ENCODE measurements at regions of chr3 and their contacts with region 1.

Region 1: DNA sequence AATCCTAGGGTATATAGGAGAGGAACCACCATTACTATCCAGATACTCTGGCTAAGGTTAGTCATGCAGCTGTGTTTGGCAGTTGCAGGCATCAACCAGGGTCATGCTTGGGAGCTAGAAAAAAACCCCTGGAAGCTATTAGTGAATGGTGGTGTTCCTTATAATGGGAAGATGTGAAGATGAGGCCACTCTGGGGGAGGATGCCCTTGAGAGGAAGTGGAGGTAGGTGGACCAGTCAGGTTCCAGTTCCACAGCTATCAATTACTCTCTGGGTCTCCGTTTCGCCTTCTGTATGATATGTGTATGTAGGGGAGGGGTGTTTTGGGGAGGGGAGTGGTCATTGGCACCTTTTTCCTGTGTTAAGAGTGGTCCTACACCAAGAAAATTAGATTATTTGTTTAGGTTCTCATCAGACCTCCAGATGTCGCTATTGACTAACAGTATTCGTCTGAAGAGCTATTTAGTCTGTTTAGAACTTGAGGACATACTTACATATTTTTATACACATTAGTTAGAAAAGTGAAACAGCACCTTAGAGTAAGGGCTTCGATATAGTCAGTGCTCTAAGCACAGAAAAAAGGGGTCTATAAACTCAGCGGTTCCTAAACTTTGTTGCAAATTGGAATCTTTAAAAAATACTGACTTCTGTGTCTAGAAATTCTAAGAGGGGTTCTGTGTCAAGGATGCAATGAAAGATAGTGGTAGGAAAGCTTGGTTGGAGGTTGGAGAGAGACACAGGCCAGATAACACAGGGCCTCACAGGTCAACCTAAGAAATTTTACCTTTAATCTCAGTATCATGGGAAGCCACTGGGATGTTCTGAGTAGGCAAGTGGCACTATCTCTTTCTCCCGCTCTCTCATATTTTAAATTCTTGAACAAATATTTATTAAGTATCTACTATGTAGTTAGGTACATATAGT is 9.1 kb upstream of the HPS3 start:
- DNase-seq: peak in 4 of 5 donors; percentile 49 to 54 (median 51)
- H3K4me3 ChIP-seq: no peak overlapping the region
- H3K4me3 Mint-ChIP-seq: no peak overlapping the region
- H3K27ac ChIP-seq: no peak overlapping the region
- H3K27ac Mint-ChIP-seq: no peak overlapping the region
- H3K4me1 ChIP-seq: no peaks in the 10 kb centered on the region
- H3K4me1 Mint-ChIP-seq: peaks cover 0 to 3% (median 2%) of the 10 kb centered on the region in 4 donors
- H3K27me3 ChIP-seq: no peaks in the 10 kb centered on the region
- H3K27me3 Mint-ChIP-seq: peaks cover 3 to 8% of the 10 kb centered on the region in 2 donors

Region 2: GRCh38 chr3:147945968-147946519 is 1174.3 kb before region 1 on chr3:
- CTCF ChIA-PET with region 1: no interaction called
- POLR2A ChIA-PET with region 1: no interaction called
- intact Hi-C with region 1: no loop called
- DNase-seq: no peak
- H3K4me3 ChIP-seq: no peak overlapping the region
- H3K4me3 Mint-ChIP-seq: peak overlapping the region in 1 of 8 donors; percentile 48
- H3K27ac ChIP-seq: no peak overlapping the region
- H3K27ac Mint-ChIP-seq: no peak overlapping the region
- H3K4me1 ChIP-seq: no peaks in the 10 kb centered on the region
- H3K4me1 Mint-ChIP-seq: peaks cover 0 to 3% (median 1%) of the 10 kb centered on the region in 4 donors
- H3K27me3 ChIP-seq: no peaks in the 10 kb centered on the region
- H3K27me3 Mint-ChIP-seq: no peaks in the 10 kb centered on the region

Region 3: GRCh38 chr3:148955544-148956346 is 164.6 kb before region 1 on chr3:
- CTCF ChIA-PET with region 1: interaction called, 31 read pairs
- POLR2A ChIA-PET with region 1: no interaction called
- intact Hi-C with region 1: loop called (anchors 1 kb)
- DNase-seq: peak in 4 of 5 donors; percentile 18 to 44 (median 38)
- H3K4me3 ChIP-seq: no peak overlapping the region
- H3K4me3 Mint-ChIP-seq: no peak overlapping the region
- H3K27ac ChIP-seq: no peak overlapping the region
- H3K27ac Mint-ChIP-seq: no peak overlapping the region
- H3K4me1 ChIP-seq: no peaks in the 10 kb centered on the region
- H3K4me1 Mint-ChIP-seq: peaks cover 5 to 8% (median 6%) of the 10 kb centered on the region in 4 donors
- H3K27me3 ChIP-seq: no peaks in the 10 kb centered on the region
- H3K27me3 Mint-ChIP-seq: peaks cover 0 to 2% of the 10 kb centered on the region in 2 donors

Region 4: GRCh38 chr3:149273096-149273751 is 152.9 kb after region 1 on chr3:
- CTCF ChIA-PET with region 1: interaction called, 154 read pairs
- POLR2A ChIA-PET with region 1: interaction called, 7 read pairs
- intact Hi-C with region 1: loop called (anchors 1 kb)
- DNase-seq: peak in 4 of 5 donors; percentile 58 to 69 (median 62)
- H3K4me3 ChIP-seq: no peak overlapping the region
- H3K4me3 Mint-ChIP-seq: no peak overlapping the region
- H3K27ac ChIP-seq: no peak overlapping the region
- H3K27ac Mint-ChIP-seq: no peak overlapping the region
- H3K4me1 ChIP-seq: peaks cover 17% of the 10 kb centered on the region
- H3K4me1 Mint-ChIP-seq: peaks cover 13 to 15% (median 14%) of the 10 kb centered on the region in 4 donors
- H3K27me3 ChIP-seq: no peaks in the 10 kb centered on the region
- H3K27me3 Mint-ChIP-seq: no peaks in the 10 kb centered on the region

Region 5: DNA sequence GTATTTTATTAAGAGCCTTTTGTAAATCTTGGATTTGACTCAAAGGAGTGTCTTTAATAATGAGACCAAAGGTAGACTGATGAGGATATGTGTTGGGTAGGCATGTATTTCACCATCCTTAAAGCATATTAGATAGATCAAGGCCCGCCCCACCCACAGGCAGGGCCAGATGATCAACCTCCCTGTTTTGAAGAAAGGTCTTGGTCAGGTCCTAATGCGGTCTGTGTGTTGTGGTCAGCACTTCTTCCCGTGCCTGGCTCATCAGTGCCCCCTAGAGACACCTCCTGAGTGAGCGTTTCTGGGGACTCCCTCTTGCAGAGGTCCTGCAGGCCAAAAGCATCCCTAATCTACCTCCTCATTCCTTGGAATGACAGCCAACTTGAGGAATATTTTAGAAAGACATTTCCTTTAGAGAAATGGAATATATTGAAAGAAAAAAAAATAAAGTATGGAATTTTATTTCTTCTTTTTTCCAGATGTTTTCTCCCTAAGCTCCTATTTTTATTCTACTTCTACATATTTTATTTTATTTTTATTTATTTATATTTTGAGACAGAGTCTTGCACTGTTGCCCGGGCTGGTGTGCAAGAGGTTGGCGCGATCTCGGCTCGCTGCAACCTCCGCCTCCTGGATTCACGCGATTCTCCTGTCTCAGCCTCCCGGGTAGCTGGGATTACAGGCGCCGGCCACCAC is 360.2 kb after region 1 on chr3:
- CTCF ChIA-PET with region 1: interaction called, 3 read pairs
- POLR2A ChIA-PET with region 1: no interaction called
- intact Hi-C with region 1: loop called (anchors 5 kb)
- DNase-seq: peak in 1 of 5 donors; percentile 4
- H3K4me3 ChIP-seq: no peak overlapping the region
- H3K4me3 Mint-ChIP-seq: no peak overlapping the region
- H3K27ac ChIP-seq: no peak overlapping the region
- H3K27ac Mint-ChIP-seq: no peak overlapping the region
- H3K4me1 ChIP-seq: no peaks in the 10 kb centered on the region
- H3K4me1 Mint-ChIP-seq: no peaks in the 10 kb centered on the region
- H3K27me3 ChIP-seq: no peaks in the 10 kb centered on the region
- H3K27me3 Mint-ChIP-seq: peaks cover 7 to 12% of the 10 kb centered on the region in 2 donors

Region 6: GRCh38 chr3:149752051-149752787 is 631.9 kb after region 1 on chr3 and contains the start of gene COMMD2:
- CTCF ChIA-PET with region 1: interaction called, 7 read pairs
- POLR2A ChIA-PET with region 1: no interaction called
- intact Hi-C with region 1: loop called (anchors 5 kb)
- DNase-seq: peak; percentile 67 to 71 (median 69)
- H3K4me3 ChIP-seq: peak within 1 kb of the TSS; percentile 42 to 85
- H3K4me3 Mint-ChIP-seq: peak within 1 kb of the TSS; percentile 94 to 98 (median 97)
- H3K27ac ChIP-seq: peak within 1 kb of the TSS; percentile 70
- H3K27ac Mint-ChIP-seq: peak within 1 kb of the TSS; percentile 86 to 98 (median 95)
- H3K4me1 ChIP-seq: peaks cover 28% of the 10 kb centered on the region
- H3K4me1 Mint-ChIP-seq: peaks cover 17 to 55% (median 33%) of the 10 kb centered on the region in 4 donors
- H3K27me3 ChIP-seq: no peaks in the 10 kb centered on the region
- H3K27me3 Mint-ChIP-seq: no peaks in the 10 kb centered on the region
- total RNA-seq, gene COMMD2: 38.0 to 44.7 TPM

Measured in CD4-positive, alpha-beta memory T cell (primary cell).